ENCODE measurements at regions of chr2 and their contacts with region 1.

Region 1: GRCh38 chr2:102473020-102473419 is at the start of gene SLC9A4:
- DNase-seq: peak in 1 of 2 donors; percentile 73
- ATAC-seq: peak; percentile 77
- total RNA-seq, gene SLC9A4: 0.09 to 0.34 TPM

Region 2: GRCh38 chr2:102615622-102616436 is 142.8 kb after region 1 on chr2:
- intact Hi-C with region 1: loop called in 1 of 2 experiments (anchors 10 kb)
- DNase-seq: peak in 1 of 2 donors; percentile 68
- ATAC-seq: peak; percentile 39

Region 3: DNA sequence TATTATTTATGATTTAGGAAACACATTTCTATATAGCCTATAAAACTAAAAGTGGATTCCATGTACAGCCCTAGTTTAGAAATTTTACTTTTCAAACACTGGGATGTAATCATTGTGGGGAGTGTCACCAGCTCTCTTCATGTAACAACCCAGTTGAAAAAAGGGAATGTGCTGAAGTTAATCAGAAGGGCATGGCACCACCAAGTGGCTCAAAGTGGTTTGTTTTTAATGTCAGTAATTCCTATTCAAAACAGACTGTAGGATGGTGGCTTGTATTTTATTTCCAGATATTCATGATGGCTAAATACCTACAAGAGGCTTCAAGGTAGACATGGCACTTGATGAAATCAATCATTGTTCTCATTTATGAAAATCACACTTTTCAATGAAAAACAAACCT is 230.7 kb after region 1 on chr2:
- intact Hi-C with region 1: loop called in 1 of 2 experiments (anchors 10 kb)
- DNase-seq: peak in 1 of 2 donors; percentile 42
- ATAC-seq: peak; percentile 86

Region 4: DNA sequence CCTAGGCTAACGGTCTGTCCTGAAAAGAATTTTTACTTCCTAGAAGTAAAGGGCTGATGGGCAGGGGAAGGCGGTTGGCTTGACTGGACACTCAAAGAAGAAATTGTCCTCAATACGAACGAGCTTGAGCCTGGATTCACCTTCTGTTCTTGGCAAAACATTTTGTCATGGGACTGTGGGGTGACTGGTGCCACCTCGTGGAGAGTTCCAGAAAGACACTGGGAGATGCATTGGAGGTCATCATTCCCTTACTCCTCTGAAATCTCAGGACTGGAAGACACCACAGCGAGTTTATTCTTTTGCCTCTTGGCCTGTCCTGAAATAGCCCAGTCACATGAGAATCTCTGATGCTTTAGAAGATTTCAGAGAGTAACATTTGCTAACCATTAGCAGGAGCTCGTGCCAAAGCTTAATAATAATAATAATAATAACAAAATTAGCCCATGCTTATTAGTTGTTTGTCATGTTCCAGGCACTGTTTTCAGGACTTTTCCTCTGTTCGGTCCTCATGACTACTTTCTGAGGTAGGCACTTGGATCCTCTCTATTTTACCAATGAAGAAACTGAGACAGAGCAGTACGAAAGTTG is 333.3 kb after region 1 on chr2:
- intact Hi-C with region 1: no loop called
- DNase-seq: peak; percentile 54 to 67
- ATAC-seq: peak; percentile 69